ENCODE measurements at regions of chr10 and their contacts with region 1.

Region 1: DNA sequence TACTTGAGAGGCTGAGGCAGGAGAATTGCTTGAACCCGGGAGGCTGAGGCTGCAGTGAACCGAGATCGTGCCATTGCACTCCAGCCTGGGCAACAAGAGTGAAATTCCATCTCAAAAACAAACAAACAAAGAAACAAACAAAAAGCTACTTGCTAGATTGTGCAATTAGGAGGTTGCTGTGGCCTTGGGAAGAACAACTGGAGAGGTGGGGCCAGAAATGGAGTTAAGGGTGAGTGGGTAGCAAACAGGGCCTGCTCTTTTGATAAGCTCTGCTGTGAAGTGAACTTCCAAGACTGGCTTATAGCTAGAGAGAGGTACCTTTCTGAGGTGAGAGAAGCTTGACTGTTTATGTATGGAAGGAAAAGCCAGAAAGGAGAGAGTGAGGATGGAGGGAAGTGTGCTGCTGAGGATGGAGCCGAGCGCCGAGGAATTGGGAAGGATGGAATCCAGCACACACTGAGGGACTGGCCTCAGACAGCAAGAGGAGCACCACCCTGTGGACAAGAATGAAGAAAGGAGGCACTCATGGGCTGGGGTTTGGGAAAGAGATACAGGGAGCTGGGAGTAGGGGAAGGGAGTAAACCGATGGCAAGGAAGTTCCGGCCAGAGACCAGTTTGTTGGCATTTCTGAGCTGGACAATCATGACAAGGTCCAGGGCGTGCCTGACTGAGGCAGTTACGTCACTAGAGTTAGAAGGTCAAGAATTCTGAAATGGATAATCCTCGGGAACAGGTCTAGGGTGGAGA is 7.0 kb upstream of the RPEL1 start:
- DNase-seq: no peak

Region 2: DNA sequence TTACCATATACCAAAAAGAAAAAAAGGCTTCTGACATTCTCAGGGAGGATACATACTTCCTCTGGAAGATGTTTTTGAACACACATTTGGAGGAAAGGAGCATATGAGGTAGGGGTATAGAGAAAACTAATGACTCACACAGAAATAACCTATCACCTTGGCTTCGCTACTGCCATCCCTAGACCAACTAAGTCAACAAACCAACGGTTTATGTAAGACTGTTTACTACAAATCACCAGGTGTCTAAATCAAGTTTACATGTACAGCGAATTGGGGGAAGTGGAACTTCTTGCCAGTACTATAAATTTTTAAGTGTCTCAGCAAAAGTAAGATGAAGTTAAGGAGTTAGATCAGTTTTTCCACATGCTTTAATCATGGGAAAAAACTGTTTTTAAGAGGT is 142.5 kb before region 1 on chr10:
- intact Hi-C with region 1: loop called in 1 of 2 experiments (anchors 10 kb)
- DNase-seq: no peak